A673 (cell line): ENCODE measurements at regions of chr1 and their contacts with region 1.

Region 1: DNA sequence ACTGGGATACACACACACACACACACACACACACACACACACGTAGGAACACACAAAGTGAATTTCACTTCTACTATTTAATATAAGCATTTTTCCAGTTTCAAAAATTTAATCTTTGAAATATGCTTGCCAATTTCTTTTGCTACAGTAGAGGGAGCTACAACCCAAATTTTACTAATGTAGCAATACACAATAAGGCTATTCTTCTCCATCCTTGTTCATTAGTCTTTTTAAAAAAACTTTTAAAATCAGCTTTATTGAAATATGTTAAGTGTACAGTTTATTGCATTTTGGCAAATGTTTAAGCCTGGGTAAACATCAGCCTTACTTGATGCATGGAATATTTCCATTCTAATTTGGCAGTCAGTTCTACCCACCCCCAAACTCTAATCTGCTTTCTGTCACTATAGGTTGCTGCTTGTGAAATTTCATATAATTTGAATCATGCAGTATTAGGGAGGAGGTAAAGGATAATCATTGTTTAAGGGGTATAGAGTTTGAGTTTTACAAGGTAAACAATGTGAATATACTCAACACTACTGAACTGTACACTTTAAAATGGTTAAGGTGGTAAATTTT is 93.0 kb upstream of the TENT5C start:
- DNase-seq: peak; percentile 26
- H3K4me3 ChIP-seq: no peak overlapping the region
- H3K27ac ChIP-seq: no peak overlapping the region
- H3K4me1 ChIP-seq: no peaks in the 10 kb centered on the region
- H3K27me3 ChIP-seq: no peaks in the 10 kb centered on the region
- CTCF ChIP-seq: peak; percentile 71

Region 2: GRCh38 chr1:117758444-117759316 is 245.8 kb after region 1 on chr1:
- CTCF ChIA-PET with region 1: interaction called, 3 read pairs
- POLR2A ChIA-PET with region 1: no interaction called
- intact Hi-C with region 1: loop called (anchors 2 kb)
- DNase-seq: peak; percentile 86
- H3K4me3 ChIP-seq: peak overlapping the region; percentile 33
- H3K27ac ChIP-seq: no peak overlapping the region
- H3K4me1 ChIP-seq: peaks cover 7% of the 10 kb centered on the region
- H3K27me3 ChIP-seq: no peaks in the 10 kb centered on the region
- CTCF ChIP-seq: peak; percentile 94

Region 3: DNA sequence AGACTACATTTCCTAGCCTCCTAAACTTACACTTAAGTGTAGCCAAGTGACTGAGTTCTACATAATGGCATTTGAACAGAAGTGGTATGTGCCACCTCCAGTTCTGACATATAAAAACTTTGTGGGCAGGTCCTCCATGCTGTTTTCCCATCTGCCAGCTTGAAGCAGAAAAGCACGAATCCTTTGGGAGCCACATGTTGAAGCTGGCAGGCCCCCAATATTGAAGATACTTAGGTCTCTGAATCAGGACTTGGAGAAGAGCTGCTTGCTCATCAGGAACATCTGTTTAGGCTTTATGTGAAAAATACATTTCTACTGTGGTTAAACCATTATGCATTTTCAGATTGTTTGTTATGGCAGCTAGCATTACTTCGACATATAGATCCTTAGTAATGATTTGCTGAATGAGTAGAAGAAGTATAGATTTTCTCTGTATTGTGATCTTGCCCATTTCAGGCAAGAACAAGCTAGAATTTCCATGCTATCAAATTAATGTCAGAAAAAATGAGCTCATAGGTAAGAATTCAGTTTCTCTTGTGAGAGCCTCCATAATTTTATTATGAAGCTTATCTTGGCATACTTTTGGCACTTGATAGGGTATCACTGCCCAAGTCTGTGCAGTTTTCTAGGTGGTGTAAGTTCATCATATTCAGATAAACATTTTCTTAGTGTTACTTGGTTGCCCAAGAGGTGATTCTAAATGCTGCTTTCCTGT is 348.2 kb after region 1 on chr1:
- CTCF ChIA-PET with region 1: no interaction called
- POLR2A ChIA-PET with region 1: no interaction called
- intact Hi-C with region 1: loop called (anchors 10 kb)
- DNase-seq: peak; percentile 4
- H3K4me3 ChIP-seq: no peak overlapping the region
- H3K27ac ChIP-seq: no peak overlapping the region
- H3K4me1 ChIP-seq: no peaks in the 10 kb centered on the region
- H3K27me3 ChIP-seq: no peaks in the 10 kb centered on the region
- CTCF ChIP-seq: no peak